ENCODE measurements at regions of chr14 and their contacts with region 1.

Region 1: DNA sequence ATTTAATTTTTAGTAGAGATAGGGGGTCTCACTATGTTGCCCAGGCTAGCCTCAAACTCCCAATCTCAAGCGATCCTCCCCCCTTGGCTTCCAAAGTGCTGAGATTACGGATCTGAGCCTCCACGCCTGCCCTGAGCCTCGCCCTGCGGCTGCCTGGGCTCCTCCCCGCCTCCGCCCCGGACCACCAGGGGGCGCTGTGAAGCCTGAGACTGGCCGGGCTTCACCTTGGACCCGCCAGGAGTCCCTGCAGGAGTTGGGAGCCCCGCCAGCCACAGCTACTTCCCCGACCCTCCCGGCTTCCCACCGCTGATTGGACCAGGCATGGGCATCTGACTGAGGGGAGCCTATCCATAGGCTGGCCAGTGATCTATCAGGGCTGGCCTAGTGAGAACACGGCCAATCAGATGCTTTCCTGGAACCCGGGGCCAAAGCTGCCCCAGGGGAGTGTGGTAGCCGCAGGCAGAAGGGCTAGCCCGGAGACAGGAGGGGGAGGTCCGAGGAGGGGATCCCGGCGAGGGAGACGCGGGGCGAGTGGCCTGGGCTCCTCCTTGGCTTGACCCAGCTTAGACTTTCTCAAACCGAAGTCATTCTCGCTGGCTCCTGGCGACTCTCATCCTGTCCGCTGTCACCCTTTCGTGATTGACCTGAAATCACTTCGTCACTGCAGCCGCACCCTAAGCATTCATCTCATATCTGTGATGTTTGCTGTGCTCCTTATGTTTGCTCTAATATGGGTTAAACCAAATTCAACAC is 15.1 kb upstream of the ANKRD9 start:
- DNase-seq: peak; percentile 98
- ATAC-seq: peak; percentile 98
- H3K4me3 Mint-ChIP-seq: peak overlapping the region; percentile 68
- H3K27ac Mint-ChIP-seq: peak overlapping the region; percentile 32
- H3K4me1 Mint-ChIP-seq: peaks cover 35% of the 10 kb centered on the region
- H3K27me3 Mint-ChIP-seq: no peaks in the 10 kb centered on the region

Region 2: DNA sequence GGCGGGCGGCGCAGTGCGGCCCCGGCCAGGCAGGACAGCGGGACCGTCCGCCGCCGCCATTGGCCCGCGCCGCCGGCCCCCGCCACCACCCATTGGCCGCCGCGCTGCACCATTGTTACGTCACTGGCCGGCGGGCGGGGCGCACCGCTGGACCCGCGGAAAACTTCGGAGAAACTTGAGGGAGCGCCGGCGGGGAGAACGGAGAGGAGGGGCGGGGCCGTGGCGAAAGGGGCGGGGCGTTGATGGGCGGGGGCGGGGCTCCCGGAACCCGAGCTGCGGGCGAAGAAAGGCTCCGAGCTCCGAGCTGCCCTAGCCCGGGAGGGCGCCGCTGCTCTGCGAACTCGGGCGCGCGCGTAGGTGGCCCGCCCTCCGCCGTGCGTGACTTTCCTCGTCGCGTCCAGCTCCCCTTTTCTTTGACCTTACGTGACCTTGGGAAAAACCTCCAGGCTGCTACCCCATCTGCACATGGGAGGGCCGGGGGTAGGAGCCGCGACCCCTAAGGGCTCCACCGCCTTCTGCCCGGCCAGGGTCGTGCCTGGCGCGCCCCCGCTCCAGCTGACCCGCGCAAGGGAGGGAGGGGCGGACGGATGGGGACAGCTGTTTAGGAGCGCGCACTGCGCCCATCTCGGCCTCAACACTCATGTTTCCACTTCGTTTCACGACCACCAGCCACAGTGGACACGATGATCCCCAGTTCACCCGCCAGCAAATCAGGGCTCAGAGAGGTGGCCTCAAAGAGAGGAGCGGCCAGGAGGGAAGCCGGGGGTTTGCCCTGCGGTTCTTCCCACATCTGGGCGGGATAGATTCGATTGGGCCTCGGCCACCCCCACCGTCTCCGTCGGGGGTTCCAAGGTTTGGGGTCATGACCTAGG is 14.7 kb before region 1 on chr14 and contains the start of gene ANKRD9:
- CTCF ChIA-PET with region 1: interaction called, 9 read pairs
- POLR2A ChIA-PET with region 1: interaction called, 4 read pairs
- intact Hi-C with region 1: loop called in 1 of 2 experiments (anchors 1 kb)
- DNase-seq: peak; percentile 95
- ATAC-seq: peak; percentile 89
- H3K4me3 Mint-ChIP-seq: peak within 1 kb of the TSS; percentile 75
- H3K27ac Mint-ChIP-seq: peak within 1 kb of the TSS; percentile 51
- H3K4me1 Mint-ChIP-seq: peaks cover 16% of the 10 kb centered on the region
- H3K27me3 Mint-ChIP-seq: peaks cover 2% of the 10 kb centered on the region
- total RNA-seq, gene ANKRD9: 4.8 to 9.3 TPM

Region 3: DNA sequence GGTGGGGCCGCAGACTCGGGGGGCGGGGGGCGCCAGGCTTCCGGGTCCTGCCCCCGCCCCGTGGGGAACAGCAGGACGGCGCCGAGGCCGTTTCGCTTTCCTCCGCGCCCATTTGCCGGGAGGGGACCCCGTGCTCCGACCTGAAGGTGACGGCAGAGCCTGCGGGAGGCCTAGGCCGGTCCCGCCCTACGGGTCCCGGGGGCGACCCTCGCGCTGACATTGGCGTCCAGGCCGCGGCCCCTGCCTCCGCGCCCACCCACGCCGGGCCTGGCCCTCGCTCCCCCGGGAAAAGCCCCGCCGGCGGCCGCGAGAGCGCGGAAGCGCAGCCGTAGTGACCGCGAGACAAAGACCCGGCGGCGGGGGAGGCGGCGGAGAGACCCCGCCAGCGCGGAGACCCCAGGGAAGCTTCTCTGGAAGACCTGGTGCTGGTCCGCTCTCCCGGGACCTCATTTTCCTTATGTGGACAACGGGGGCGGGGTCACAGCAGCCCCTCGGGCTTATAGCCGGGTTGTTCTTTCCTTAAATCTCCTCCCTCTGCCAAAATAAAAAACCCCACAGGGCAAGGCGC is 30.7 kb after region 1 on chr14:
- CTCF ChIA-PET with region 1: interaction called, 9 read pairs
- POLR2A ChIA-PET with region 1: no interaction called
- intact Hi-C with region 1: loop called in 1 of 2 experiments (anchors 1 kb)
- DNase-seq: peak; percentile 70
- ATAC-seq: peak; percentile 81
- H3K4me3 Mint-ChIP-seq: peak overlapping the region; percentile 63
- H3K27ac Mint-ChIP-seq: peak overlapping the region; percentile 55
- H3K4me1 Mint-ChIP-seq: peaks cover 2% of the 10 kb centered on the region
- H3K27me3 Mint-ChIP-seq: peaks cover 3% of the 10 kb centered on the region

Region 4: GRCh38 chr14:102917469-102918211 is 393.0 kb after region 1 on chr14:
- CTCF ChIA-PET with region 1: interaction called, 3 read pairs
- POLR2A ChIA-PET with region 1: no interaction called
- intact Hi-C with region 1: loop called in 1 of 2 experiments (anchors 1 kb)
- DNase-seq: peak; percentile 82
- ATAC-seq: peak; percentile 52
- H3K4me3 Mint-ChIP-seq: no peak overlapping the region
- H3K27ac Mint-ChIP-seq: peak overlapping the region; percentile 48
- H3K4me1 Mint-ChIP-seq: no peaks in the 10 kb centered on the region
- H3K27me3 Mint-ChIP-seq: no peaks in the 10 kb centered on the region

Region 5: DNA sequence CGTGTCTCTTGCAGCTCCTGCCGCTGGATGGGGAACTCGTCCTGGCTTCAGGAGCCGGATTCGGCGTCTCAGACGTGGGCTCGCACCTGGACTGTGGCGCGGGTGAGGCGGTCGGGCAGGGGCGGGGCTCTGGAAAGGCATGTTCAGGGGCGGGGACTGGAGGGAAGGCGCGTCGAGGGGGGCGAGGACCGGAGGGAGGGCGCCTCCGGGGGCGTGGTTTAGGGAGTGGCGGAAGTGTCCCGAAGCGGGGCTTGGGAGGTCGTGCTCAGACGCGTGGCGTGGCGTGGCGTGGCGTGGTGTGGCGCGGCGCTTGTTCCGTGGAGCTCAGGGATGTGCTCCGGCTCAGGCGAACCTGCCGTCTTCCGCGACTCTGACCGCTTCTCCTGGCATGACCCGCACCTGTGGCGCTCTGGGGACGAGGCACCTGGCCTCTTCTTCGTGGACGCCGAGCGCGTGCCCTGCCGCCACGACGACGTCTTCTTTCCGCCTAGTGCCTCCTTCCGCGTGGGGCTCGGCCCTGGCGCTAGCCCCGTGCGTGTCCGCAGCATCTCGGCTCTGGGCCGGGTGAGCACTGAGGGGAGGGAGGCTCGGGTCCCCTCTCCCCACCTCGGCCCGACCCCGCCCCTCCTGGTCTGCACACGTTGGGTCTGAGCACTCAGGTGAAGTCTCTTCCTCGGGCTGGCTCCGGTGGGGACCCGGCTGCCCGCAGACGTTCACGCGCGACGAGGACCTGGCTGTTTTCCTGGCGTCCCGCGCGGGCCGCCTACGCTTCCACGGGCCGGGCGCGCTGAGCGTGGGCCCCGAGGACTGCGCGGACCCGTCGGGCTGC is 404.0 kb after region 1 on chr14:
- CTCF ChIA-PET with region 1: no interaction called
- POLR2A ChIA-PET with region 1: no interaction called
- intact Hi-C with region 1: no loop called
- DNase-seq: peak; percentile 75
- ATAC-seq: peak; percentile 72
- H3K4me3 Mint-ChIP-seq: peak overlapping the region; percentile 41
- H3K27ac Mint-ChIP-seq: no peak overlapping the region
- H3K4me1 Mint-ChIP-seq: peaks cover 11% of the 10 kb centered on the region
- H3K27me3 Mint-ChIP-seq: peaks cover 27% of the 10 kb centered on the region